ENCODE measurements at regions of chr20 and their contacts with region 1.

Region 1: DNA sequence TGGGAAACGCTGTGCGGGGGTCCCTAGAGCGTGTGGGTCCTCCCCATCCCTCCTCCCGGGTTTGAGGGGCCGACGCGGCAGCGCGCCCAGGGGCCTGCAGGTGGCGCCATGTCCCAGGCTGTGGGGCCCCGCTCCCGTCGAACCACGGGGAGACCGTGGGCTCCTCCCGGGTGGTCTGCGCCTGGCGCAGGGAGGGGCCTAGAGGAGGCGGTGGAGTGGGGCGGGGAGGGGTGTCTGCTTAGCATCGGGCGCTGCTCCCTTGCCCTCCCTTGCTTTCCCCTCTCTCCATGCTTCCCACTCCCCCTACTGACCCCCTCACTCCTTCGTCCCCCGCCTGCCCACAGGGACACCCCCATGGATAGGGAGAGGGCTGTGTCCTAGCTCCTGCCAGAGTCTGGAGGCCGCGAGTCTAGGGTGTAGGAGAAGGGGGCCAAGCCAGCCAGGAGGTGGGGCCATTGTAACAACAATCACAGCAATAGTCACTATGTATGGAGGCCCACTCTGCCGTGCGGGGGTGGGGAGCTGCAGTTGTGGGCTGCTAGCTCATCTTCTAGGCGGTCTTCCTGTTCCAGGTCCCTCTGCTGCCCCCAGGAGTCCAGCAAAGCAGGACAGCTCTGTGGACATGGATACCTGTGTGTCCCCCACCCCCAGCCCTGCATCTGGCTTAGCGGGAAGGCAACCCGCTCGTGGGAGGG is 51.7 kb downstream of the CHMP4B start:
- DNase-seq: peak in 13 of 14 experiments; percentile 18 to 65 (median 37)
- ATAC-seq: peak; percentile 37
- H3K4me3 ChIP-seq: no peak overlapping the region
- H3K4me3 Mint-ChIP-seq: no peak overlapping the region
- H3K27ac ChIP-seq: no peak overlapping the region
- H3K27ac Mint-ChIP-seq: no peak overlapping the region
- H3K4me1 ChIP-seq: peaks cover 32% of the 10 kb centered on the region
- H3K4me1 Mint-ChIP-seq: peaks cover 31% of the 10 kb centered on the region
- H3K27me3 ChIP-seq: no peaks in the 10 kb centered on the region
- H3K27me3 Mint-ChIP-seq: no peaks in the 10 kb centered on the region
- CTCF ChIP-seq: peak; percentile 62

Region 2: GRCh38 chr20:33791959-33792597 is 70.8 kb before region 1 on chr20:
- CTCF ChIA-PET with region 1: no interaction called
- POLR2A ChIA-PET with region 1: no interaction called
- intact Hi-C with region 1: loop called in 1 of 2 experiments (anchors 5 kb)
- DNase-seq: peak; percentile 27 to 68 (median 40)
- ATAC-seq: peak; percentile 65
- H3K4me3 ChIP-seq: no peak overlapping the region
- H3K4me3 Mint-ChIP-seq: no peak overlapping the region
- H3K27ac ChIP-seq: no peak overlapping the region
- H3K27ac Mint-ChIP-seq: no peak overlapping the region
- H3K4me1 ChIP-seq: peaks cover 8% of the 10 kb centered on the region
- H3K4me1 Mint-ChIP-seq: peaks cover 9% of the 10 kb centered on the region
- H3K27me3 ChIP-seq: no peaks in the 10 kb centered on the region
- H3K27me3 Mint-ChIP-seq: no peaks in the 10 kb centered on the region
- CTCF ChIP-seq: peak; percentile 83

Region 3: GRCh38 chr20:33848391-33848790 is 14.5 kb before region 1 on chr20:
- CTCF ChIA-PET with region 1: no interaction called
- POLR2A ChIA-PET with region 1: interaction called, 14 read pairs
- intact Hi-C with region 1: no loop called
- DNase-seq: no peak
- ATAC-seq: no peak
- H3K4me3 ChIP-seq: no peak overlapping the region
- H3K4me3 Mint-ChIP-seq: no peak overlapping the region
- H3K27ac ChIP-seq: no peak overlapping the region
- H3K27ac Mint-ChIP-seq: peak overlapping the region; percentile 50
- H3K4me1 ChIP-seq: peaks cover 41% of the 10 kb centered on the region
- H3K4me1 Mint-ChIP-seq: peaks cover 87% of the 10 kb centered on the region
- H3K27me3 ChIP-seq: no peaks in the 10 kb centered on the region
- H3K27me3 Mint-ChIP-seq: no peaks in the 10 kb centered on the region
- CTCF ChIP-seq: no peak